ENCODE measurements at regions of chr3 and their contacts with region 1.

Region 1: GRCh38 chr3:30611613-30612436 is 5.4 kb downstream of the TGFBR2 start:
- DNase-seq: no peak
- ATAC-seq: peak; percentile 63
- H3K4me3 ChIP-seq: peak overlapping the region; percentile 3 to 60; a peak in 1 of 4 replicates
- H3K27ac ChIP-seq: peak overlapping the region; percentile 79
- H3K4me1 ChIP-seq: peaks cover 82 to 88% of the 10 kb centered on the region in 2 experiments
- H3K27me3 ChIP-seq: no peaks in the 10 kb centered on the region
- CTCF ChIP-seq: no peak
- POLR2A ChIP-seq: no peak
- RAD21 ChIP-seq: no peak

Region 2: GRCh38 chr3:30319713-30320112 is 292.1 kb before region 1 on chr3:
- CTCF ChIA-PET with region 1: no interaction called
- POLR2A ChIA-PET with region 1: no interaction called
- RAD21 ChIA-PET with region 1: interaction called in 1 of 2 experiments, 4 read pairs
- intact Hi-C with region 1: loop called (anchors 5 kb)
- DNase-seq: peak; percentile 73
- ATAC-seq: peak; percentile 97
- H3K4me3 ChIP-seq: no peak overlapping the region
- H3K27ac ChIP-seq: no peak overlapping the region
- H3K4me1 ChIP-seq: peaks cover 5 to 16% of the 10 kb centered on the region in 2 experiments; a peak in 3 of 4 replicates
- H3K27me3 ChIP-seq: no peaks in the 10 kb centered on the region
- CTCF ChIP-seq: peak; percentile 40 to 67 (median 55); a peak in 5 of 6 replicates
- POLR2A ChIP-seq: no peak
- RAD21 ChIP-seq: peak; percentile 79

Region 3: DNA sequence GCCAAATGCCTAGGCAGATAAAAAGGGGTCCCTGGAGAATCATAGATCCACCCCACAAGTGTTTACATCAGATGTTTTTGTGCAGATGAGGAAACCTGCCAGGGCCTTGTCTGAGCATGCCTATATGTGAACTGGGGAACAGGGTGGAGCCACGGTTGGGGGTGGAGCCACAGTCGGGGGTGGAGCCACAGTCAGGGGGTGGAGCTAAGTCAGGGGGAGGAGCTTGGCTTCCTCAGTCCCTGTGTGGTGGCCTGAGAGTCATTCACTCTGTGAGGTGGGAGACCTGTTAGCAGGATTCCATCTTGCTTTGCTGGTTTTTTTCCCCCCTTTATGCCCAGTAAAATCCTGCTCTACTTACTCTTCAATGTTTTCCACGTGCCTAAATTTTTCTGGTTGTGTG is 63.2 kb before region 1 on chr3:
- CTCF ChIA-PET with region 1: no interaction called
- POLR2A ChIA-PET with region 1: no interaction called
- RAD21 ChIA-PET with region 1: no interaction called
- intact Hi-C with region 1: no loop called
- DNase-seq: no peak
- ATAC-seq: peak; percentile 99
- H3K4me3 ChIP-seq: no peak overlapping the region
- H3K27ac ChIP-seq: no peak overlapping the region
- H3K4me1 ChIP-seq: peaks cover 8 to 14% of the 10 kb centered on the region in 2 experiments; a peak in 3 of 4 replicates
- H3K27me3 ChIP-seq: no peaks in the 10 kb centered on the region
- CTCF ChIP-seq: no peak
- POLR2A ChIP-seq: no peak
- RAD21 ChIP-seq: no peak

Region 4: GRCh38 chr3:31472479-31473390 is 860.9 kb after region 1 on chr3:
- CTCF ChIA-PET with region 1: no interaction called
- POLR2A ChIA-PET with region 1: no interaction called
- RAD21 ChIA-PET with region 1: no interaction called
- intact Hi-C with region 1: no loop called
- DNase-seq: no peak
- ATAC-seq: no peak
- H3K4me3 ChIP-seq: no peak overlapping the region
- H3K27ac ChIP-seq: no peak overlapping the region
- H3K4me1 ChIP-seq: no peaks in the 10 kb centered on the region
- H3K27me3 ChIP-seq: no peaks in the 10 kb centered on the region
- CTCF ChIP-seq: no peak
- POLR2A ChIP-seq: no peak
- RAD21 ChIP-seq: no peak